ENCODE measurements at regions of chr11 and their contacts with region 1.

Region 1: GRCh38 chr11:126716456-126717083 is 284.0 kb downstream of the KIRREL3 start:
- DNase-seq: peak; percentile 57
- CTCF ChIP-seq: peak; percentile 75

Region 2: DNA sequence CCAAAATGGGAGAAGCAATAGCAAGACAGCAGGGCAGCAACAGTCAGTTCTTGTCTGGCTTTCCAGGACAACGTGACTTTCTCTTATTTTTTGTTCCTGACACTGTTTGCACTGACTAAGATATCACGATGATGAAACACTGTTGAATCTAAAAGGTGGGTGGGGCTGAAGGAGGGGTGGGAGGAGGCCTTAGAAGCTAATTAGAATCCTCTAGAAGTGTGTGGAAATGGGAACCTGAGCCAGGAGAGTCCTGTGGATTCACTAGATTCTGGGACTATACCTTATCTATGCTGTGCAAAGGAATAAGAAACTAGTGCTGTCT is 60.8 kb before region 1 on chr11:
- CTCF ChIA-PET with region 1: no interaction called
- POLR2A ChIA-PET with region 1: no interaction called
- DNase-seq: no peak
- CTCF ChIP-seq: no peak

Region 3: DNA sequence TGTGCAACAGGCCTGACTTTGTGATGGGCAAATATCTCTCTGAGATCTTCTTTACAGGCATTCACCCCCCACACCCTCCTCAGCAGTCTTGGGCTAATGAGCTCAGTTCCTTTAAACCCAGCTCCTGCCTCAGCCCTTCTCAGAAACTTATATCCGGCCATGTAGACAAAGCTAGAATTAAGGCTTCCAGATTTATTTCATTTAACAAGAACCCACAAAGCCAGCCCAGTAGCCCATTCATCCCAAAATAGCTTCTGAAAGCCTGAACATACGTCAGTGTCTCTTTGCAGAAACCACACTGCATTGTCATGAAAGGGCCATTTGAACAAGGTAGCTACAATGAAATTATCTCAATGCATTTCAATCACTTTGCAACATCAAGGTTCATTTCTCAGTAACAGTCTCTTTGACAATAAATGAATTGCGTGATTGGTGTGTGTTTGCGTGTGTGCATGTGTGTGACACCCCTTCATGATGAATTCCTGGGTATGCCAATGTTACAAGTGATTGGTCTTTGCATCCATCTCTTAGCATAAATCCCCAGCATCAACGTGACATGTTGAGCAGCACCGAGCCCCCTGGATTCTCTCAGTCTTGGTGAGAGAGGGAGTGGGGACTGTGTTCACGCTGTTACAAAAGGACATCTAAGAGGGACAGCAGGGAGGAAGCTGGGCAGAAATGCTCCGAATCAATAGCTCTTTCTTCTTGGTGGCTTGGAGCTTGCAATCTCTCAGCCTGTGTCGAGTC is 15.6 kb before region 1 on chr11:
- CTCF ChIA-PET with region 1: interaction called, 60 read pairs
- POLR2A ChIA-PET with region 1: no interaction called
- DNase-seq: no peak
- CTCF ChIP-seq: no peak

Region 4: GRCh38 chr11:126731551-126732142 is 15.1 kb after region 1 on chr11:
- CTCF ChIA-PET with region 1: interaction called, 21 read pairs
- POLR2A ChIA-PET with region 1: no interaction called
- DNase-seq: no peak
- CTCF ChIP-seq: no peak

Region 5: DNA sequence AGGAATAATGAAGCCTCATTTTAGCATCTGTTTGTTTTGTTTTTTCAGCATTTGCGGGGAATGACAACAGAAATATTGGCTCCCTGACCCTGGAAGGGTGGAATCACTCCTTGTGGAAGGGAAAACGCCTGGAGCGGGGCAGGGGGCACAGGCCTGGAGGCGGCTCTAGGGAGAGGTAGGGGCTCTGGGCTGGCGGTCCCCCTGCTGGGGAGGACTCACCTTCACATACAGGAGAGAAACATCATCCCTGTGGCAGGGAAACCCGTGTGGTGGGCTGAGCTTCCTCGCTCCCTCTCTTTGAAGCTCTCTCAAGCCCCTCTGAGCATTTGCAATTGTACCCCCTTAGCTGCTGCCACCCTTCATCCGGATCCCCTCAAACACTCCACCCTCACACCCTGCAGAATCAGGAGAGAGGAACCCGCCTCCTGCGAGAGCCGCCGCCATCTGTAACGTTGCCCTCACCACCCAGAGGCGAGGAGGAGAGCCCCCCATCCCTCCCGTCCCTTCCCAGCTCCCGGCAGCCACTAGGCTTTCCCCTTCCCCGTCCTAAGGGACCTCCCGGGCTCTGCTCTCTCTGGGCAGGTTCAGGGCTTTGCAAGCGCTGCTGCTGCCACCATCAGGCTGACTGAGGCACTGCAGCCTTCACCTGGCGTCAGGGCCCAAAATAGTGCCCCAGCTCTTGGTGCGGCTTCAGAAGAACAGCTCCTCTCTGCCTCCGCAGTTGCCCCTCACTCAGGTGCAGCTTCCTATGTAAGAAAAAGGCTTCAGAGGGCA is 273.6 kb after region 1 on chr11:
- CTCF ChIA-PET with region 1: interaction called, 141 read pairs
- POLR2A ChIA-PET with region 1: no interaction called
- DNase-seq: peak; percentile 77
- CTCF ChIP-seq: peak; percentile 99

Region 6: DNA sequence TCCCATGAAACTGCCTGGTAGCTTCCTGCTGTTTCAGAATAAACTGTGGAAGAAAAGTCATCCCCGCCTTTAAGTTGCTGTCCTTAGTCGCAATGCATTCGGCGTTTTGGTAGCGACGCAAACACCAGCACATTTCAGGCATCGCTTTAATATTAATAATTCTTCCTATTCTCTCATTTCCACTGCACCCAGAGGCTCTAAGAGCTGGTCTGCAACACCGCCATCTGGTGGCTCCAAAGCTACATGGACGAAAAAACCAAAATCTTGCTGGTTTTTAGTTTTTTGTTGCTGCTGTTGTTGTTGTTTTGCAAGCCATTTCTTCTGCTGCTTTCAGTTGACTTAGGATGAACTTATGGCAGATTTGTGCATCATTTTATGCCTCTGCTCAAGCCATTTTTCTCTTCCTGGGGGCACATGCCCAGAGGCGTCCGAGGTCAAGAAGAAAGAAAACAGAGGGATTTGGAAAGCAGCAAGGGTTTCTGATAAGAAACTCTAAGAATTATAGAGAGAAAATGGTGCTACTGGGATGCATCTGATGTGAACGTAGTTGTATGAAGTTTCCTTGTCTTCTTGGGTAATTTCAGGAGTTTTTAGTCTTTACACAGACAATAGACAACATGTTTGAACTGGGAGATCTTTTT is 629.4 kb after region 1 on chr11:
- CTCF ChIA-PET with region 1: interaction called, 20 read pairs
- POLR2A ChIA-PET with region 1: no interaction called
- DNase-seq: peak; percentile 57
- CTCF ChIP-seq: peak; percentile 63